ENCODE measurements at regions of chr22 and their contacts with region 1.

Region 1: DNA sequence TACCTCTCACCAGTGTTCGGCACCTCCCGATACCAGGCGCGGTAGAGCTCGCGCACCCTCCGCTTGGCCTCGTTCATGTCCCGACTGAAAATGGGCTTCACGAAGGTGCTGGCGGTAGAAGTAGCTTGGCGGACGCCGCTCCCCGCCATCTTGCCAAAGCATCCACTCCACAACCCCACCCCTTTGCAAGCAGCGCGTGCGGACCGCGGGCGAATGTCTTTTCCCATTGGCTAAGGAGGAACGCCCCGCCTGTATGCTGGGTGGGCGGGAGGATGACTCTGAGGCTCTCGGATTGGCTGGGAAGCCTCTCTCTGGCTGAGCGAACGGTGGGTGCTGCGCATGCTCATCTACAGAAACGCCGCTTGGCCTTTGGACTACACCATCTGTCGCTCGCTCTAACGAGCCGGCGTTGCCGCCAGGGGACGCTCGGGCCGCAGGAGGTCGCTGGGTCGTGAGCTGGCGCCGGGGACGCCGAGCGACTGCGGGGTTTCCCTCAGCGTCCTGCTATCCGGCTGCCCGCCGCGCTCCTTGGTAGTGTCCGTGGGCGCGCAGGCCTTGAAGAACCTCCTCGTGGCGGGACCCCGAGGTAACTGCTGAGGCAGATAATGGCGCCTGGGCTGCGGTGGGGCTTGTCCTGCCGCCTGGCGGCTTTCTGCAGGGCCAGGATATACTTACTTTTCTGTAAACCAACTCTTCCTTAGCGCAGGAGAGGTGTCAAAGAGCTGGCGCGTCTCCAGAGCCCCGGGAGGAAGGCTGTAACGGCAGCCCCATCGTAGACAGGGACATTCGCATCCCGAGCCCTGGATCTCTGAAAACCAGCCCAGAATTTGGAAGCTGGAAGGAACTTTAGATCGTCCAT is at the start of gene NDUFA6:
- DNase-seq: peak; percentile 99
- ATAC-seq: peak; percentile 96
- total RNA-seq, gene NDUFA6: 298 TPM

Region 2: GRCh38 chr22:41976401-41976901 is 114.4 kb before region 1 on chr22:
- intact Hi-C with region 1: no loop called
- DNase-seq: no peak
- ATAC-seq: peak; percentile 77

Region 3: GRCh38 chr22:42269407-42270177 is 178.8 kb after region 1 on chr22:
- intact Hi-C with region 1: loop called (anchors 10 kb)
- DNase-seq: peak; percentile 64
- ATAC-seq: peak; percentile 71

Region 4: GRCh38 chr22:42444077-42444904 is 353.5 kb after region 1 on chr22:
- intact Hi-C with region 1: loop called (anchors 5 kb)
- DNase-seq: peak; percentile 91
- ATAC-seq: peak; percentile 89

Measured in Right ventricle myocardium superior (tissue), 1 donor.